Vagina (tissue), 2 donors: ENCODE measurements at regions of chr1 and their contacts with region 1.

Region 1: GRCh38 chr1:6052543-6053205 is 7.0 kb downstream of the KCNAB2 start:
- DNase-seq: no peak
- H3K4me3 ChIP-seq: no peak overlapping the region
- H3K27ac ChIP-seq: no peak overlapping the region
- H3K4me1 ChIP-seq: no peaks in the 10 kb centered on the region
- H3K27me3 ChIP-seq: no peaks in the 10 kb centered on the region
- CTCF ChIP-seq: peak in 1 of 3 experiments; percentile 30
- POLR2A ChIP-seq: no peak

Region 2: GRCh38 chr1:6239950-6240768 is 187.5 kb after region 1 on chr1:
- intact Hi-C with region 1: loop called (anchors 5 kb)
- DNase-seq: no peak
- H3K4me3 ChIP-seq: no peak overlapping the region
- H3K27ac ChIP-seq: no peak overlapping the region
- H3K4me1 ChIP-seq: peaks cover 18% of the 10 kb centered on the region
- H3K27me3 ChIP-seq: peaks cover 27% of the 10 kb centered on the region
- CTCF ChIP-seq: no peak
- POLR2A ChIP-seq: no peak

Region 3: GRCh38 chr1:7726623-7727022 is 1673.9 kb after region 1 on chr1:
- intact Hi-C with region 1: loop called (anchors 10 kb)
- DNase-seq: no peak
- H3K4me3 ChIP-seq: no peak overlapping the region
- H3K27ac ChIP-seq: no peak overlapping the region
- H3K4me1 ChIP-seq: no peaks in the 10 kb centered on the region
- H3K27me3 ChIP-seq: no peaks in the 10 kb centered on the region
- CTCF ChIP-seq: no peak
- POLR2A ChIP-seq: no peak